Dorsolateral prefrontal cortex (tissue), 120 donors: ENCODE measurements at regions of chr6 and their contacts with region 1.

Region 1: DNA sequence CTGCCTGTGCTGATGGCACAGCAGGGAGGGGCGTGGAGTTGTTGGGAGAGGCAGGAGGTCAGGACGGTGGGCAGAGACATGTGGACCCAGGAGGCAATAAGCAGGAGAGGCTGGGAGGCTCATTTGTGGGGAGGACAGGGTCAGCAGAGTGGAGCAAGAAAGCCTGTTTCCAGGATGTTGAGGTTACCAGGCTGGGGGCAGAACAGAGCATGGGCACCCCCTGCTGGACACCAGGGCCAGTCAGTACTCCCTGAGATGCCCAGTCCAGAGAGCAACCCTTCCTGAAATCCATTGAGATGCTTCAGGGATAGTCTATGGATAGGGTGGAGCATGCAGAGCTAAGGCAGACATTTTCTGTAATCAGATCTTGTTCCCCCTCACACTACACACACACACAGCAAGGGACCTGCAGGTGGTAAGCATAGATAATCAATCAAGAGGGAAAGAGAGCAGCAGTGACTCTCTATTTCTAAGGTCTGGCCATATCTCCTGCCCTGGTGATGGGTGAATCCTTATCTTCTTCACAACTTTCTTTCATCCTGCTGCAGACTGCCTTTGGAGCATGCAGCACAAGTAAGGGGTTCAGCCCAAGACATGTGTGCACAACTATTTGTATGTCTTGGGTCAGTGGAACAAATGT is 41.7 kb downstream of the MOCS1 start:
- DNase-seq: peak; percentile 35 to 82 (median 76)
- H3K4me3 ChIP-seq: no peak overlapping the region
- H3K27ac ChIP-seq: peak overlapping the region in 53 of 59 donors; percentile 2 to 96 (median 65)
- H3K27me3 ChIP-seq: no peaks in the 10 kb centered on the region
- CTCF ChIP-seq: peak in 55 of 56 donors; percentile 47 to 89 (median 76)

Region 2: GRCh38 chr6:39361657-39362486 is 530.7 kb before region 1 on chr6:
- intact Hi-C with region 1: loop called (anchors 5 to 10 kb)
- DNase-seq: peak; percentile 58 to 84 (median 73)
- H3K4me3 ChIP-seq: peak overlapping the region in 5 of 59 donors; percentile 13 to 34 (median 27)
- H3K27ac ChIP-seq: peak overlapping the region in 55 of 59 donors; percentile 6 to 82 (median 64)
- H3K27me3 ChIP-seq: no peaks in the 10 kb centered on the region
- CTCF ChIP-seq: peak; percentile 24 to 84 (median 70)

Region 3: GRCh38 chr6:39430871-39431523 is 461.6 kb before region 1 on chr6:
- intact Hi-C with region 1: loop called in 1 of 2 experiments (anchors 10 kb)
- DNase-seq: peak; percentile 71 to 84 (median 82)
- H3K4me3 ChIP-seq: peak overlapping the region in 31 of 59 donors; percentile 0 to 54 (median 17)
- H3K27ac ChIP-seq: peak overlapping the region in 57 of 59 donors; percentile 15 to 92 (median 72)
- H3K27me3 ChIP-seq: no peaks in the 10 kb centered on the region
- CTCF ChIP-seq: peak in 36 of 56 donors; percentile 10 to 59 (median 31)

Region 4: GRCh38 chr6:39724787-39725631 is 167.6 kb before region 1 on chr6 and contains the start of gene KIF6:
- intact Hi-C with region 1: loop called in 1 of 2 experiments (anchors 10 kb)
- DNase-seq: peak; percentile 87 to 96 (median 94)
- H3K4me3 ChIP-seq: peak within 1 kb of the TSS; percentile 54 to 98 (median 85)
- H3K27ac ChIP-seq: peak within 1 kb of the TSS; percentile 49 to 99 (median 94)
- H3K27me3 ChIP-seq: no peaks in the 10 kb centered on the region
- CTCF ChIP-seq: peak in 31 of 56 donors; percentile 5 to 71 (median 36)
- total RNA-seq, gene KIF6: 3.2 to 34.6 (median 11.4) TPM

Region 5: DNA sequence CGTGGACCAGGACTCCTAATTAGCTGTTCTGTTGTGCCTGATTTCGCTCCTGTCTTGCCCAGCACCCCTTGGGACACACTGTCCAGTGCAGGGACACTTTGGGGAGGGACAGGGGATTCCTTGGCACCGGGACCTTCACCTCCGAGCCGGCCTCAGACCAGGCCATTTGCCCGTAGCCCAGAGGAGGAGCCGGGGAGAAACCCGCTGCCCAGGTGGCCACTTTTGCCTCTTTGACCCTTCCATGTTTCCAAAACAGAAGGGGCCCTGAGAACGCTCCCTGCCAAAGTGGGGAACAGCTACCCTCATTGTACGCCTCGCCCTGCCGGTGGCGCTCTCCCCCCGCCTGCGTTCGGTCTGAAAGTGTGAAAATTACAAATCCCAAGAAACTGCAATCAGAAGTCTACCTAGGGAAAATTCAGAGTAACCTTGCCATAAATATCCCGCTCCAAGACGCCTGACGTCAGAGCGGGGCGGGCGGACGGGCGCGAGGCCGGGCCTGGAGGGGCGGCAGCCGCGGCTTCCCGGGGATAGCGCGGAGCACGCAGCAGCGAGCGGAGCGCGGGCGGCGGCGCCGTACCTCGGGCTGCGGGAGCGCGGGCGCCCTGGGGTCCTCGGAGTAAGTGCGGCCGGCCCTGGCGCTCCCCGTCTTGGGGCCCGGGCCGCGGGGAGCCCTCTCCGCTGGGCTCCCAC is 100.6 kb before region 1 on chr6 and contains the start of gene DAAM2:
- intact Hi-C with region 1: loop called (anchors 5 kb)
- DNase-seq: peak in 4 of 10 donors; percentile 45 to 78 (median 66)
- H3K4me3 ChIP-seq: peak within 1 kb of the TSS; percentile 48 to 84 (median 73)
- H3K27ac ChIP-seq: peak within 1 kb of the TSS; percentile 52 to 98 (median 94)
- H3K27me3 ChIP-seq: peaks cover 0 to 6% (median 0%) of the 10 kb centered on the region in 45 donors
- CTCF ChIP-seq: peak in 42 of 56 donors; percentile 2 to 53 (median 30)
- total RNA-seq, gene DAAM2: 43.8 to 450 (median 152) TPM

Region 6: GRCh38 chr6:39961178-39961577 is 68.6 kb after region 1 on chr6:
- intact Hi-C with region 1: no loop called
- DNase-seq: no peak
- H3K4me3 ChIP-seq: no peak overlapping the region
- H3K27ac ChIP-seq: no peak overlapping the region
- H3K27me3 ChIP-seq: no peaks in the 10 kb centered on the region
- CTCF ChIP-seq: no peak